ENCODE measurements at regions of chr7 and their contacts with region 1.

Region 1: DNA sequence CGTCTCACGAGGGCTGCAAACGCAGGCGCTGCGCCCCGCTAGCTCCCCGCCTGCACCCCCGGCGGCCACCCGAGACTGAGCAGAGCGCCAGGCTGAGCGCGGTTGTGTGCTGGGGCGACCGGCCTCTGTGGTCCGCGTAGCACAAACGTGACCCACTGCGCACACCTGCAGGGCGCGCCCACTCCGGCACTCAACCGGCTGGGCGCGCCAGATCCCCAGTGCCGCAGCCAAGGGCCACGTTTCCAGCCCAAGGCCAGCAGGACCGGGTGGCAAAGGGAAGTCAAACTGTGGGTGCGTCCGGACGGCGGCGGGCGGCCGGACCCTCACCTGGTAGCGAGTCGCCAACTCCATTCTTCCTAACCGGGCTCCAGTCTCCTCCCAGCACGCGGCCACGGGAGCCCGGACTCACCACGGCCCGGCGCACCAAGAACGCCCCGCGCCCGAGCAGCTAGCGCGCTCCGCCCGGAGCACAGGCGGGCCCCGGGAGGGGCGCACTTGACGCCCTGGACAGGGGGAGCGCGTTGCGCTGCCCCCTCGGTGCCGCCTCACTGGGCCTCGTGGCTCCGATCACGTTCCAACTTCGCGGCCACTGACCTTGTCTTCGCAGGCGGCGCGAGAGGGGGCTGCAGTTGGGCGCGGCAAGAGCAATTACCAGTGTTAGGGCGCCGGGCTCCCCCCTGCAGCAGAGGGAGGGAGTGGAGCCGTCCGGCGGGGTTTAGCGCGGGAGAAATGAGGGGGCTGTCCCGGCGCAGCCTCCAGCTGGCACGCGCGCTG is at the start of gene CDCA7L:
- DNase-seq: peak; percentile 67 to 83
- ATAC-seq: peak; percentile 89 to 97 (median 93)
- H3K4me3 ChIP-seq: peak within 1 kb of the TSS; percentile 89
- H3K27ac ChIP-seq: peak within 1 kb of the TSS; percentile 76
- H3K4me1 ChIP-seq: no peaks in the 10 kb centered on the region
- H3K27me3 ChIP-seq: no peaks in the 10 kb centered on the region
- CTCF ChIP-seq: no peak
- total RNA-seq, gene CDCA7L: 1.3 to 2.7 (median 2.1) TPM

Region 2: GRCh38 chr7:21912305-21912704 is 33.3 kb before region 1 on chr7:
- intact Hi-C with region 1: loop called in 1 of 2 experiments (anchors 5 kb)
- DNase-seq: peak in 1 of 2 donors; percentile 60
- ATAC-seq: peak in 3 of 4 donors; percentile 37 to 70 (median 64)
- H3K4me3 ChIP-seq: no peak overlapping the region
- H3K27ac ChIP-seq: no peak overlapping the region
- H3K4me1 ChIP-seq: peaks cover 25% of the 10 kb centered on the region
- H3K27me3 ChIP-seq: no peaks in the 10 kb centered on the region
- CTCF ChIP-seq: no peak

Measured in psoas muscle (tissue), 8 donors.